ENCODE measurements at regions of chr17 and their contacts with region 1.

Region 1: GRCh38 chr17:5419356-5419958 is at the start of gene NUP88:
- DNase-seq: peak; percentile 95
- ATAC-seq: peak; percentile 91
- H3K4me3 ChIP-seq: peak within 1 kb of the TSS; percentile 76 to 99 (median 92)
- H3K27ac ChIP-seq: peak within 1 kb of the TSS; percentile 86 to 98 (median 94)
- H3K4me1 ChIP-seq: peaks cover 28 to 31% of the 10 kb centered on the region in 2 donors
- H3K27me3 ChIP-seq: no peaks in the 10 kb centered on the region
- CTCF ChIP-seq: no peak
- POLR2A ChIP-seq: peak; percentile 94
- total RNA-seq, gene NUP88: 140 to 197 (median 166) TPM

Region 2: DNA sequence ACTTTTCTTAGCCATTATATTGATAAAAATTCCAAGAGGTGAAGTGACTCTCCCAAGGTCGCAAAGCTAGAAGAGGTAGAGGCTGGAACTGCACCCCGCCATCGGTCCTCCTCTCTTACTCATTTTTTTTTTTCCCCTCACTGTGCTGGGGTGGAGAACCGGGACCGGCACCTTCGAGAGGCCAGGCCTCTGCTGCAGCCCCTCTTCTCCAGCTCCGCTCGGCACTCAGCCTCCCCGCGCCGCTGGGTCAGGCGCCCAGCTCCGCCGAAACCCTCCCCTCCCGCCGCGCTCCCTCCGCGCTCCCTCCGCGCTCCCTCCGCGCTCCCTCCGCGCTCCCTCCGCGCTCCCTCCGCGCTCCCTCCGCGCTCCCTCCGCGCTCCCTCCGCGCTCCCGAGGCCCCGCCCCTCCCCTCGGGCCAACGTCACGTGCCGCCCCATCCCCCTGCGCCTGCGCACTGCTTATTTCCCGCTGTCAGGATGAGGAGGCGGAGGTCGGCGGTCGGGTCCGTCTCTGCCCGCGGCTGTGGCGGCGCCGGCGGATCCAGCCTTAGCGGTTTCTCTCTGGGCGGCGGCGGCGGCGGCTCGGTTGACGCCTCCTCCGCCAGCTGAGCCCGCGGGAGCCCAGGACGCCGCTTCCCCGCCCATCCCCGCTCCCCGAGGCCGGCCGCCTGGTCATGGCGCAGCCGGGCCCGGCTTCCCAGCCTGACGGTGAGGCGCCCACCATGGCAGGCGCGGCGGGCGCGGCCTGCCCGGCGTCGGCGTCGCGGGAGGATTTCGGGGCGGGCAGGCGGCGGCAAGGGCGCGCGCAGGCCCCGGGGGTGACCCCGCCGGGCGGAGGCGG is 137.4 kb before region 1 on chr17 and contains the start of gene RABEP1:
- in situ Hi-C with region 1: no loop called
- intact Hi-C with region 1: loop called (anchors 1 kb)
- DNase-seq: peak; percentile 85 to 88
- ATAC-seq: peak; percentile 90 to 91
- H3K4me3 ChIP-seq: peak within 1 kb of the TSS; percentile 72 to 82 (median 76)
- H3K27ac ChIP-seq: peak within 1 kb of the TSS; percentile 93 to 98 (median 97)
- H3K4me1 ChIP-seq: peaks cover 28 to 36% of the 10 kb centered on the region in 2 donors
- H3K27me3 ChIP-seq: no peaks in the 10 kb centered on the region
- CTCF ChIP-seq: peak; percentile 7 to 53 (median 32)
- POLR2A ChIP-seq: peak; percentile 96 to 97
- total RNA-seq, gene RABEP1: 55.4 to 94.8 (median 87.2) TPM

Region 3: DNA sequence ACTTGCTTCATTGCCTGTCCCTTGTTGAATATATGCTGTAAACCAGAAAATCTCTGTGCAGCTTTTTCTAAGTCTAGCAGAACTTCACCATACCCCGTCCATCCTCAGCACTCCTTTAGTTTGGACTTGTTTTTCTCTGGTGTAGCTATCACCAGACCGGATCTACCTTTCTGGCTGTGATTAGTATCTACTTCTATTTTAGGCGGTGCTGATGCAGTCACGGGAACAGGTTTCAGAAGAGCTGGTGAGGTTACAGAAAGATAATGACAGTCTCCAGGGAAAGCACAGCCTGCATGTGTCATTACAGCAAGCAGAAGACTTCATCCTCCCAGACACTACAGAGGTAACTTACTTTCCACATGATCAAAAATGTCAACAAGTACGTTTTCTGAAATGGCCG is 46.3 kb before region 1 on chr17:
- in situ Hi-C with region 1: no loop called
- intact Hi-C with region 1: loop called (anchors 2 kb)
- DNase-seq: peak; percentile 36 to 57
- ATAC-seq: peak; percentile 96 to 99
- H3K4me3 ChIP-seq: no peak overlapping the region
- H3K27ac ChIP-seq: peak overlapping the region; percentile 68 to 76 (median 74)
- H3K4me1 ChIP-seq: peaks cover 0 to 4% of the 10 kb centered on the region in 2 donors
- H3K27me3 ChIP-seq: no peaks in the 10 kb centered on the region
- CTCF ChIP-seq: no peak
- POLR2A ChIP-seq: no peak

Region 4: GRCh38 chr17:5438716-5439445 is 19.4 kb after region 1 on chr17 and contains the start of gene C1QBP:
- in situ Hi-C with region 1: no loop called
- intact Hi-C with region 1: loop called (anchors 1 kb)
- DNase-seq: peak; percentile 70 to 87
- ATAC-seq: peak; percentile 97 to 98
- H3K4me3 ChIP-seq: peak within 1 kb of the TSS; percentile 69 to 88 (median 78)
- H3K27ac ChIP-seq: peak within 1 kb of the TSS; percentile 77 to 86 (median 83)
- H3K4me1 ChIP-seq: peaks cover 19% of the 10 kb centered on the region in 2 donors
- H3K27me3 ChIP-seq: no peaks in the 10 kb centered on the region
- CTCF ChIP-seq: peak; percentile 98 to 100 (median 99)
- POLR2A ChIP-seq: peak; percentile 49 to 59
- total RNA-seq, gene C1QBP: 102 to 200 (median 134) TPM

Measured in gastrocnemius medialis (tissue), 4 donors.